Colonic mucosa (tissue), 4 donors: ENCODE measurements at regions of chr3 and their contacts with region 1.

Region 1: GRCh38 chr3:56988458-56989168 is 71.9 kb upstream of the SPATA12 start:
- DNase-seq: peak; percentile 85
- H3K4me3 ChIP-seq: no peak overlapping the region
- H3K27ac ChIP-seq: no peak overlapping the region
- H3K4me1 ChIP-seq: peaks cover 5% of the 10 kb centered on the region
- H3K27me3 ChIP-seq: no peaks in the 10 kb centered on the region
- CTCF ChIP-seq: peak; percentile 66

Region 2: GRCh38 chr3:56801662-56802377 is 186.8 kb before region 1 on chr3 and contains the start of gene ARHGEF3:
- intact Hi-C with region 1: loop called (anchors 5 kb)
- DNase-seq: peak; percentile 88
- H3K4me3 ChIP-seq: peak within 1 kb of the TSS; percentile 85
- H3K27ac ChIP-seq: peak within 1 kb of the TSS; percentile 53
- H3K4me1 ChIP-seq: peaks cover 4% of the 10 kb centered on the region
- H3K27me3 ChIP-seq: no peaks in the 10 kb centered on the region
- CTCF ChIP-seq: peak; percentile 35
- total RNA-seq, gene ARHGEF3: 10.2 to 14.7 TPM